ENCODE measurements at regions of chr1 and their contacts with region 1.

Region 1: GRCh38 chr1:209747580-209748262 is 8.1 kb upstream of the TRAF3IP3 start:
- DNase-seq: peak; percentile 82
- ATAC-seq: peak; percentile 94
- H3K4me3 ChIP-seq: peak overlapping the region; percentile 21; the same call in 1 of the 2 replicates
- H3K27ac ChIP-seq: no peak overlapping the region
- H3K4me1 ChIP-seq: peaks cover 36% of the 10 kb centered on the region
- H3K27me3 ChIP-seq: no peaks in the 10 kb centered on the region
- CTCF ChIP-seq: peak; percentile 59 to 96 (median 78); a peak in 5 of 6 replicates
- EP300 ChIP-seq: peak; percentile 22 to 25; a peak in 1 of 4 replicates
- POLR2A ChIP-seq: no peak
- RAD21 ChIP-seq: peak; percentile 67

Region 2: GRCh38 chr1:209576798-209577197 is 170.9 kb before region 1 on chr1:
- CTCF ChIA-PET with region 1: interaction called, 58 read pairs
- POLR2A ChIA-PET with region 1: no interaction called
- RAD21 ChIA-PET with region 1: interaction called, 5 read pairs
- SMC1A ChIA-PET with region 1: interaction called, 4 read pairs
- in situ Hi-C with region 1: loop called (anchors 5 kb)
- intact Hi-C with region 1: loop called (anchors 2 kb)
- DNase-seq: peak; percentile 12
- ATAC-seq: peak; percentile 99
- H3K4me3 ChIP-seq: no peak overlapping the region
- H3K27ac ChIP-seq: no peak overlapping the region
- H3K4me1 ChIP-seq: no peaks in the 10 kb centered on the region
- H3K27me3 ChIP-seq: peaks cover under 1 to 1% of the 10 kb centered on the region in 2 experiments; a peak in 3 of 4 replicates
- CTCF ChIP-seq: peak; percentile 93 to 96 (median 94)
- EP300 ChIP-seq: no peak
- POLR2A ChIP-seq: no peak
- RAD21 ChIP-seq: peak; percentile 86

Region 3: GRCh38 chr1:209627732-209628196 is 120.0 kb before region 1 on chr1:
- CTCF ChIA-PET with region 1: interaction called, 11 read pairs
- POLR2A ChIA-PET with region 1: no interaction called
- RAD21 ChIA-PET with region 1: interaction called, 3 read pairs
- SMC1A ChIA-PET with region 1: interaction called, 4 read pairs
- in situ Hi-C with region 1: no loop called
- intact Hi-C with region 1: loop called (anchors 5 kb)
- DNase-seq: no peak
- ATAC-seq: peak; percentile 95
- H3K4me3 ChIP-seq: no peak overlapping the region
- H3K27ac ChIP-seq: no peak overlapping the region
- H3K4me1 ChIP-seq: no peaks in the 10 kb centered on the region
- H3K27me3 ChIP-seq: no peaks in the 10 kb centered on the region
- CTCF ChIP-seq: peak; percentile 98 to 99 (median 98); a peak in 5 of 6 replicates
- EP300 ChIP-seq: no peak
- POLR2A ChIP-seq: no peak
- RAD21 ChIP-seq: peak; percentile 96

Region 4: GRCh38 chr1:209685821-209686220 is 61.9 kb before region 1 on chr1:
- CTCF ChIA-PET with region 1: interaction called, 18 read pairs
- POLR2A ChIA-PET with region 1: no interaction called
- RAD21 ChIA-PET with region 1: interaction called, 5 read pairs
- SMC1A ChIA-PET with region 1: interaction called, 60 read pairs
- in situ Hi-C with region 1: no loop called
- intact Hi-C with region 1: no loop called
- DNase-seq: no peak
- ATAC-seq: peak; percentile 88
- H3K4me3 ChIP-seq: no peak overlapping the region
- H3K27ac ChIP-seq: no peak overlapping the region
- H3K4me1 ChIP-seq: no peaks in the 10 kb centered on the region
- H3K27me3 ChIP-seq: no peaks in the 10 kb centered on the region
- CTCF ChIP-seq: no peak
- EP300 ChIP-seq: no peak
- POLR2A ChIP-seq: no peak
- RAD21 ChIP-seq: no peak

Region 5: DNA sequence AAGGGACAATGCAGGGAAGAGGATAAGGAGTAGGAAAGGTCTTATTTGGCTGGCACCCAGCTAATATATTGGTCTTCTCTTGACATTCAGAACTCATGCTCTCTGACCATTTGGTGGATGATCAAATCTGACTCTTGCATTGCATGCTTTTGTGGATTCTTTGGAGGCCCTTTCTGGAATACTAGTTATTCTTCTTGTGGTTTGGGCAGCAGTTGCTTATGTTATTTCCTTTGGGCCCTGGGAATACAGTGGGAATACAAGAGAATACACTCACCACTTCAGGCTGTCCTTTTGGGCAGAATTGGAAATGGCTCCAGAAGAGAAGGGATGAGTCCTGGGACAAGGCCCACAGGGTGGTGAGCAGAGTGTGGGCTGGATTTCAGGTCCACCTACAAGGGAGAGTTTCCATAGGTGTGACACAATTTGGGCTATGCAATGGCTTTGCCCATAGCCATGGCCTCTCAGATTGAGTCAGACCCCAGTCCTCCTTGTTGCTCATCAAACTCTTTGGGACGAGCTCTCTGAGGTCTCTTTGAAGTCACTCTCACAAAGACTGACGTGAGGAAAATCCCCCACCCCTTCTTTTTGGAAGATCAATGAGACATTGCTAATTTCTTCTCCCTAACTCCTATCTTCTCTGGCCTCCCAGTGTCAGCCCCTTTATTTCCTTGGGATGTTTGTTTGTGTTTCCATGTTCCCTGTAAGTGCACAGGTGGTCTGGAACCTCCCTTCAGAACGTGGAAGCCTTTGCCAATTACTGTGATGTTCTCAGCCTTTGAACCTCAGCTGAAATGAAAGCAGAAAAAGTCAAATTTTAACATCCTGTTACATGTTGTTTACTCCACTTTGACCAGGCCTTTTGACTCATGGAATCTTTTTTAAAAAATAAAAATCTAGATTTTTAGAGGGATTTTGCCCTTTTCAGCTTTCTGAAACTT is 23.7 kb before region 1 on chr1:
- CTCF ChIA-PET with region 1: interaction called, 11 read pairs
- POLR2A ChIA-PET with region 1: interaction called, 3 read pairs
- RAD21 ChIA-PET with region 1: interaction called, 6 read pairs
- SMC1A ChIA-PET with region 1: interaction called, 4 read pairs
- in situ Hi-C with region 1: no loop called
- intact Hi-C with region 1: no loop called
- DNase-seq: no peak
- ATAC-seq: peak; percentile 72
- H3K4me3 ChIP-seq: no peak overlapping the region
- H3K27ac ChIP-seq: no peak overlapping the region
- H3K4me1 ChIP-seq: no peaks in the 10 kb centered on the region; the same call in 1 of the 2 replicates
- H3K27me3 ChIP-seq: no peaks in the 10 kb centered on the region
- CTCF ChIP-seq: no peak
- EP300 ChIP-seq: no peak; a peak in 1 of 4 replicates
- POLR2A ChIP-seq: no peak
- RAD21 ChIP-seq: no peak

Region 6: DNA sequence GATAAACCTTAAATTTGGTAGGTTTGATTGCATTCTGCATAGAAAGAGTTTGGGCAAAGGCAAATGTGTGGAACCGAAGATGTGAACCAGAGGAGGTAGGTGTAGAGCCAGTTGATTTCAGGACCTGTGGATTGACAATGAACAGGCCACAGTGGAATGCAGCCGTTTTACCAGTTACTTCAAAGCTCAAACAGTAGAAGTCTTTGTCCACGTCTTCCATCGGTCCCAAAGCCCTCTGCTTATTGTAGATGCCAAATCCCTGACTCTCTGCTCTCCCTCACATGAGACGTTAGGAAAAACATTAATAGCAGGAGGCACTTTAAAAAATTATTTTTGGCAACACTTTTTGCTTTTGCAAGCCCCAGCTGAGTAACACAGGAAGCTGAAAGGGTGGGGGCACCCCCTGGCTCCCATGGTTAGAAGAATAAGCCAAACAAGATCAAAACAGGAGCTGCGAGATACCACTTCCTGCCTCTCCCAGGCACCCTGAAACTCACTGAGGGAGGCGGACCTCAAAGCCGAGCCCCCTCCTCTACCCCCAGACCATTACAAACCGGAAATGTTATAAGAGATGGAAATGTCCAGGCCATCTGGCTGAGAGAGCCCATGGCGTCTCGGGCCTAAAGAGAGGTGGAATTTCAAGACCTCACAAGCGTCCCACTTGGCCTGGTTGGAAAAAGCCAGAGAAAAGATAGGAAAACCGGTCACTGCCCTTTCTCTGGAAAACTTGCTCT is 21.6 kb after region 1 on chr1:
- CTCF ChIA-PET with region 1: interaction called, 117 read pairs
- POLR2A ChIA-PET with region 1: interaction called, 107 read pairs
- RAD21 ChIA-PET with region 1: interaction called, 188 read pairs
- SMC1A ChIA-PET with region 1: interaction called, 282 read pairs
- in situ Hi-C with region 1: no loop called
- intact Hi-C with region 1: loop called (anchors 1 kb)
- DNase-seq: peak; percentile 75
- ATAC-seq: peak; percentile 84
- H3K4me3 ChIP-seq: peak overlapping the region; percentile 72
- H3K27ac ChIP-seq: peak overlapping the region; percentile 93
- H3K4me1 ChIP-seq: peaks cover 52% of the 10 kb centered on the region
- H3K27me3 ChIP-seq: no peaks in the 10 kb centered on the region
- CTCF ChIP-seq: no peak
- EP300 ChIP-seq: peak; percentile 73 to 79; a peak in 3 of 4 replicates
- POLR2A ChIP-seq: no peak
- RAD21 ChIP-seq: no peak

Region 7: DNA sequence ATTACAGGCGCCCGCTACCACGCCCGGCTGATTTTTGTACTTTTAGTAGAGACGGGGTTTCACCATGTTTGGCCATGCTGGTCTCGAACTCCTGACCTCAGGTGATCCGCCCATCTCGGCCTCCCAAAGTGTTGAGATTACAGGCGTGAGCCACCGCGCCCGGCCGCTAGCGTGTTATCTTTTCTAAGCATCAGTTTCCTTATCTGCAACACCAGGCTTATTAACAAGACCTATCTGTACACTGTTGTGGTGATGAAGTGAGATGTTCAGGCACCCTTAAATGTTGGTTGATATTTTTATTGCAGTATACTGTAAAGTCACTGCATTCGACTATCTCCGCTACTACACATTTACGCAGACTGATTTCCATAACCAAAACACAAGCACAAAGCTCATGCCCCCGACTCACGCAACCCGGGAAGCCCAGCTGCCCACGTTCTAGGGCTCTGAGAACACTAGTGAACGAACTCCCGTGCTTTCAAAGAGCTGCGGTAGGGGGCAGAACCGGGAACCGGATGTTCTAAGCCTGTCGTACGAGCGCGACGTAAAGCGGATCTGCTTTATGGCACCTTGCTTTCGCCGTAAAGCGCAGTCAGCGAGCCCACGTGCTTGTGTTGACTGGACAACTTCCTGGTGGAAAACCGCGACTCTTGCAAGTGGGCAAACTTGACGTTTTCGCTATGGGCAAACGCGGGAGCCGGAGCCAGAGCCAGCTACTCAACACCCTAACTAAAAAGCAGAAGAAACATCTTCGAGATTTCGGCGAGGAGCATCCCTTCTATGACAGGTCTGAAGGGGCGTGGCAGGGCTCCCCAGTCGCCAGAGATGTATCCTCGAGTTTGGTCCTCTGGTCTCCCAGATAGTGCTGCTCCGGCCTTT is 79.9 kb after region 1 on chr1 and contains the start of gene UTP25:
- CTCF ChIA-PET with region 1: interaction called, 39 read pairs
- POLR2A ChIA-PET with region 1: no interaction called
- RAD21 ChIA-PET with region 1: interaction called, 6 read pairs
- SMC1A ChIA-PET with region 1: interaction called, 4 read pairs
- in situ Hi-C with region 1: no loop called
- intact Hi-C with region 1: loop called (anchors 2 kb)
- DNase-seq: peak; percentile 97
- ATAC-seq: peak; percentile 93
- H3K4me3 ChIP-seq: peak within 1 kb of the TSS; percentile 99
- H3K27ac ChIP-seq: peak within 1 kb of the TSS; percentile 62
- H3K4me1 ChIP-seq: no peaks in the 10 kb centered on the region
- H3K27me3 ChIP-seq: no peaks in the 10 kb centered on the region
- CTCF ChIP-seq: peak; percentile 75 to 81 (median 80)
- EP300 ChIP-seq: 0 out of 4 replicates have a peak, but pooled peaks of 1 of the 2 experiments have one; percentile 16
- POLR2A ChIP-seq: peak; percentile 79
- RAD21 ChIP-seq: no peak
- polyA plus RNA-seq, gene UTP25: 3.0 TPM

Region 8: DNA sequence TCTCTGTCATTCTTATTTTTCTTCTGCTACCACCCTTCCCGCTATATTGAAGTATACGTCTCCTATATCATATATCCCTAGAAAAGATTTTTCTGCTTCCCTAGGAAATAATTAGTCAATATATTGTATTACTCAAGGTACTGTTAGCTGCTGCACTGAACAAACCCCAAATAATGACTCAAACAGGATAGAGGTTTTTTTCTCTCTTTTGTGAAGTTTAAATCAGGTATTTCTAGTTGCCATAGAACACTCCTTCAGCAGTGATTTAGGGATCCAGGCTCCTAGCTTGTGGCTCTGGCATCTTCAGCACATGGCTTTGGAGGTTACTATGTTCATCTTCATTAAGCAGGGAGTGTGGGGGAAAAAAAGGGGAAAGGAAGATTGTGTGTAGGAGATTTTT is 208.4 kb after region 1 on chr1:
- CTCF ChIA-PET with region 1: no interaction called
- POLR2A ChIA-PET with region 1: no interaction called
- RAD21 ChIA-PET with region 1: no interaction called
- SMC1A ChIA-PET with region 1: no interaction called
- in situ Hi-C with region 1: no loop called
- intact Hi-C with region 1: no loop called
- DNase-seq: no peak
- ATAC-seq: no peak
- H3K4me3 ChIP-seq: no peak overlapping the region
- H3K27ac ChIP-seq: no peak overlapping the region
- H3K4me1 ChIP-seq: no peaks in the 10 kb centered on the region
- H3K27me3 ChIP-seq: no peaks in the 10 kb centered on the region
- CTCF ChIP-seq: no peak
- EP300 ChIP-seq: no peak
- POLR2A ChIP-seq: no peak
- RAD21 ChIP-seq: no peak